Right cardiac atrium (tissue), 5 donors: ENCODE measurements at regions of chr15 and their contacts with region 1.

Region 1: DNA sequence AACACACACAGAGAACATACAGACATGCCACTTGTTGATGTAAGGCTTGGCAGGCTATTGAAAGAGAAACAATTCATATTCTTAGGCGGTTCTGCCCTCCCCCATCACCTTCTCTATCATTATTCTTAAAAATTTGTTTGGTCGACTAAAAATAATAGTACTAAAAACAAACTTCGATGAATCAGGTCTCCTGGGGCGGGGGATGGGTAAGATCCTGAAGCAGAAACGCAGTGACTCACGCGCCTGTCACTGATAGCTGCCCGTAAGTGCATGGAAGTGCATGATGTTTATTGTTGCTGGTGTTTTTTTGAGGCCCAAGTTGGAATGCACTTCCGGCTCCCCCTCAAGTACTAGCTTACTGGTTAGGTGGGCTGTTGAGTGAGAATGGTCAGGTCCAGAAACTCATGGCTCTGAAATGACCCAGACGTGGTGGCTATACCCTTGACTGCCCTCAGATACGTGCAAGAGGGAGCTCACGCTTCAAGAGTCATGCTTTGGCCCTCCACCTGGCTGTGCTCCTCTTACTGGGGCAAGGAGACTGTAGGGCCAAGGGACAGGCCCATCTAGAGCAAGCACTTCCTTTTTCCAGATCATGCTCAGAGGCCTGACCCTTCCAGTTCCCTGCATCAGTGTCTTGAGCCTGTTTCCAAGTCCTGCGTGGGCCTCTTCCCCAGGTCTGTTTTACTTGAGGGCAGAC is 10.9 kb downstream of the SMAD3 start:
- DNase-seq: peak in 1 of 3 donors; percentile 50
- ATAC-seq: peak in 1 of 2 donors; percentile 5
- H3K4me3 ChIP-seq: no peak overlapping the region
- H3K27ac ChIP-seq: no peak overlapping the region
- H3K4me1 ChIP-seq: peaks cover 25% of the 10 kb centered on the region
- H3K27me3 ChIP-seq: no peaks in the 10 kb centered on the region

Region 2: DNA sequence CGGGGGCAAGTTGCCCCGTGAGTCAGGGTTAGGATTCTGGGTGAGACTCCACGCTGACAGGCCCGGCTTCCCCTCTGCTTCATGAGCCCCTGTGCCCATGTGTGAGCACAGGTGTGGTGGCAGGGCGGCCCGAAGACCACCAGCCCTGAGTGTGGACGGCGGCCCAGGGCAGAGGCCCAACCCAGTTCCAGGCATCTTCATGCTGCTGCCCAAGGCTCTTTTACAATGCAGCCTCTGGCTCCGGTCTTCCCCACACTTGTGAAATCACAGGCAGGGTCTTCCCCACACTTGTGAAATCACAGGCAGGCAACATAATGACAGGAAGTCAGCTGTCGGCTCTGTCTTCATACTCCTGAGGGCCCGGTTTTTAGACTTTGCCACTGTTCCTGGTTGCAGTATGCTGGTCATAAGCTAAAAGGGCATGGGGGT is 99.4 kb after region 1 on chr15:
- intact Hi-C with region 1: no loop called
- DNase-seq: peak; percentile 53 to 67 (median 63)
- ATAC-seq: peak; percentile 17 to 25
- H3K4me3 ChIP-seq: no peak overlapping the region
- H3K27ac ChIP-seq: no peak overlapping the region
- H3K4me1 ChIP-seq: peaks cover 10% of the 10 kb centered on the region
- H3K27me3 ChIP-seq: no peaks in the 10 kb centered on the region

Region 3: DNA sequence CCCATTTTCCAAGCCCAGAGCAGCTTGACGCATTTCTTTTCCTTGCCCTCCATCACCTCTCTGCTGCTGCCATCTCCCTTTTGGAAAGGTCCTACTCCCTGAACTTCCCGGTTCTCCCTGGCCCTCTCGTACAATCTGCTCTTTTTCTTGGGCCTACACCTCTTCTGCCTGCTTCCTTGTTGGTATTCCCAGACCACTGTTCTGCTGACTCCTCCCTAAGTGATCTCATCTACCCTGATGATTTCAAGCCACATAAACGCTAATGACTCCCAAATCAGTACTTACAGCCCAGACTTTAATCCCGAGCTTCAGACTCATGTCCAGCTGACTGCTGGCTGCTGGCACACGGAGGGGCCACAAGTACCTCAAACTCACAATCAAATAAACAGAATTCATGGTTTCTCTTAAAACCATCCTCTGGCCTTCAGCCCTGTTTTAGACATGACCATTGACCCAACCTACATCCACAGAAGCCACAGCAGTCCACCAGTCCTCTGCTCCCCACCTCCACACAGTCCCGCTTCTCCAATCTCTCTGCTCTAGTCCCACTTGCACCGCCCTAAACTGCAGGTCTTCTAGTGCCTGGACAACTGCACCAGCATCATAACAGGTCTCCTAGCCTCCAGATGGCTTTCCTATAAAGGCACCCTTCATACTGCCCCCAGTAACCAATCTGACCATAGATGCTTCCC is 120.5 kb after region 1 on chr15:
- intact Hi-C with region 1: loop called in 1 of 4 experiments (anchors 10 kb)
- DNase-seq: peak in 2 of 3 donors; percentile 19 to 63
- ATAC-seq: peak; percentile 44 to 56
- H3K4me3 ChIP-seq: no peak overlapping the region
- H3K27ac ChIP-seq: peak overlapping the region; percentile 55
- H3K4me1 ChIP-seq: peaks cover 15% of the 10 kb centered on the region
- H3K27me3 ChIP-seq: no peaks in the 10 kb centered on the region